BJ (cell line): ENCODE measurements at regions of chr5 and their contacts with region 1.

Region 1: DNA sequence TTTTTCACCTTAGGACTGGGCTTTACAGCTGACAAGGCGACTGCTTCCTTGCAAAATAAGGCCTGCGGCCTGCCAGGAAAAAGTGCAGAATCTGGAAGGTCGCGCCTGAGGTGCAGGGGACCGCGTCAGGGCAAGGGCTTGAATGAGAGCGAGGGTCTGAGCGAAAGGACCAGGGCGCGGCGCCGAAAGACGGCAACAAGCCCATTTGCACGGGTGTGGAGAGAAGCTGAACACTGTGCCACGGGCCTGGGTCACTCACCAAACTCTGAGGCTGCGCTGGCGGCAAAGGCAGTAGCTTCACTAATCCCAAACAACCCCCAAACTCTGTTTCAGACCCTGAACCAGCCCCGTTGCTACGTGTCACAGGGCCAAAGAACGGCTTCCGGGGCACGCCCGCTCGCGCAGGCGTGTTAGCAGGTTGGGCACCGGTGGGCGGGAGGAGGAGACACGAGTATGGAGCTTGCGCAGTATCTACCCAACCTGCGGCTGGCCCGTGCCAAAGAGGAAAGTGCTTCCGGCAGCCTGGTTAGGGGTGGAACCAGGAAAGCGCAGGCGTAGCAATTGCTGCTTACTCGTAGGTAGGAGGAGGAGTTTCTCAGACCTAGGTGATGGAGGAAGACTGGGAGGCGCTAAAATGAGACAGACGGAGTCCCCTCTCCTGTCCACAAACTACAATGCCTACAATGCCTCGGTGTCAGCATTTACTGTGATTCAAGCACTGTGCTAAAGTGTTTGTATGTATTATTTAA is at the starts of genes KCTD16 and YIPF5:
- DNase-seq: peak; percentile 85
- H3K4me3 ChIP-seq: peak within 1 kb of the TSS; percentile 70
- H3K27me3 ChIP-seq: no peaks in the 10 kb centered on the region
- CTCF ChIP-seq: no peak
- polyA plus RNA-seq, gene KCTD16: 1.7 and 2.6 TPM in 2 replicates
- polyA plus RNA-seq, gene YIPF5: 91.7 and 132 TPM in 2 replicates

Region 2: DNA sequence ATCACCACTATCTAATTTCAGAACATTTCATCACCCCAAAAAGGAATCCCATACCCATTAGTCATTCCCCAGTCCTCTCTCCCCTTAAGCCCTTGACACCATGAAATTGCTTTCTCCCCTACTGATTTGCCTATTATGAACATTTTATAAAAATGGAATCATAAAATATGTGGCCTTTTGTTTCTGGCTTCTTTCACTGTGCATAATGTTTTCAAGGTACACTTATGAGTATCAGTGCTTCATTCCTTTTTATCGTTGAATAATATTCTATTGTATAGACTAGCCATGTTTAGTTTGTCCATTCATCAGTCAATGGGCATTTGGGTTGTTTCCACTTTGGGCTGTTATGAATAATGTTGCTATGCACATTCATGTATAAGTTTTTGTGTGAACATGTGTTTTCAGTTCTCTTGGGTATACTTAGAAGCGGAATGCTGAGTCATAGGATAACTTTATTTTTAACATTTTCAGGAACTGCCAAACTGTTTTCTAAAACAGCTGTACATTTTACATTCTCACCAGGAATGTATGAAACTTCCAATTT is 1444.2 kb before region 1 on chr5:
- CTCF ChIA-PET with region 1: no interaction called
- POLR2A ChIA-PET with region 1: interaction called, 18 read pairs
- DNase-seq: peak; percentile 77
- H3K4me3 ChIP-seq: no peak overlapping the region
- H3K27me3 ChIP-seq: no peaks in the 10 kb centered on the region
- CTCF ChIP-seq: no peak